ENCODE measurements at regions of chr15 and their contacts with region 1.

Region 1: DNA sequence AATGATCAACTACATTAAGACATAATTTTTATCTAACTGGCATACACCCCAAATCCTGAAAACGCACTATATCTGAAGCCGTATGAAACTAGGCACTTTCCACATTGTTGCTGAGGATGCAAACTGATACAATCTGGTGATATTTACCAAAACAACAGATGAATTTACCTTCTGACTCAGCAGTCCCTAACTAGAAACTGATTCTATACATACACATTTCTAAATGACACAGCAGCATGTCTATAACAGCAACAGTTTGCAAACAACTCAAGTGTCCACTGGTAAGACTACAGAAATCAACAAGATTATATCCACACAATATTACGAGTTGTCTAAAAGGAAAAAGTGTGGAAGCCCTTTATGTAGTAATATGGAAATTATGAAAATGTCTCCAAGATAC is 22.9 kb downstream of the SECISBP2L start:
- DNase-seq: no peak
- ATAC-seq: no peak
- H3K4me3 ChIP-seq: no peak overlapping the region
- H3K27ac ChIP-seq: no peak overlapping the region
- H3K4me1 ChIP-seq: no peaks in the 10 kb centered on the region
- H3K27me3 ChIP-seq: no peaks in the 10 kb centered on the region
- CTCF ChIP-seq: no peak

Region 2: GRCh38 chr15:49122541-49123062 is 99.2 kb after region 1 on chr15:
- intact Hi-C with region 1: loop called in 1 of 10 experiments (anchors 10 kb)
- DNase-seq: no peak
- ATAC-seq: no peak
- H3K4me3 ChIP-seq: no peak overlapping the region
- H3K27ac ChIP-seq: no peak overlapping the region
- H3K4me1 ChIP-seq: peaks cover 0 to 10% (median 0%) of the 10 kb centered on the region in 9 donors
- H3K27me3 ChIP-seq: no peaks in the 10 kb centered on the region
- CTCF ChIP-seq: no peak

Region 3: DNA sequence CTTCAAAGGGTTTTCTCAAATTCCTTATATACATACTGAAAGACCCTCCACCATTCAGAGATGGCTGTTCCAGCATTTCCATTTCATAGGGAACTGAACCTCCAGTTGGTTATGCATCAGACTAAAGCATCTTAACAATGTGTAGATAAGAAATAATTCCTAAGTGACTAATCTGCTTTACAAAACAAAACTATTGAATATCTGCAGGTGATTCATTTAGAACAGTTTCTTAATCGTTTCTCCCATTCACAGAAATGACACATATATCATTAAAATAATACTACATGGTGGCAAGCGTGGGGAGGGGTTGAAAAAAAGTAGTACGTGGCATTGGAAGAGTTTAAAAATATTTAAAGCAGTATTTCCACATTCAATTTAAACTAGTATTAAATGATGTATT is 112.5 kb after region 1 on chr15:
- intact Hi-C with region 1: loop called in 2 of 10 experiments (anchors 10 kb)
- DNase-seq: no peak
- ATAC-seq: no peak
- H3K4me3 ChIP-seq: no peak overlapping the region
- H3K27ac ChIP-seq: no peak overlapping the region
- H3K4me1 ChIP-seq: peaks cover 0 to 17% (median 0%) of the 10 kb centered on the region in 9 donors
- H3K27me3 ChIP-seq: no peaks in the 10 kb centered on the region
- CTCF ChIP-seq: no peak

Measured in heart right ventricle (tissue), 16 donors.